ENCODE measurements at regions of chr6 and their contacts with region 1.

Region 1: GRCh38 chr6:136774352-136775041 is 17.8 kb downstream of the MAP3K5 start:
- DNase-seq: peak in 2 of 3 donors; percentile 47 to 53
- H3K4me3 ChIP-seq: peak overlapping the region in 1 of 7 experiments; percentile 2
- H3K27ac ChIP-seq: no peak overlapping the region
- H3K4me1 ChIP-seq: peaks cover 3 to 26% (median 13%) of the 10 kb centered on the region in 4 experiments
- H3K27me3 ChIP-seq: no peaks in the 10 kb centered on the region

Region 2: GRCh38 chr6:136761227-136761922 is 13.1 kb before region 1 on chr6:
- CTCF ChIA-PET with region 1: interaction called, 11 read pairs
- POLR2A ChIA-PET with region 1: interaction called, 4 read pairs
- DNase-seq: peak in 2 of 3 donors; percentile 52 to 75
- H3K4me3 ChIP-seq: peak overlapping the region in 6 of 7 experiments; percentile 7 to 71 (median 52)
- H3K27ac ChIP-seq: peak overlapping the region; percentile 6 to 52
- H3K4me1 ChIP-seq: peaks cover 23 to 71% (median 58%) of the 10 kb centered on the region in 4 experiments
- H3K27me3 ChIP-seq: no peaks in the 10 kb centered on the region

Measured in common myeloid progenitor, CD34-positive (primary cell).